AG04449 (cell line): ENCODE measurements at regions of chr3 and their contacts with region 1.

Region 1: GRCh38 chr3:167380004-167380689 is at the start of gene ZBBX:
- DNase-seq: no peak
- H3K4me3 ChIP-seq: peak within 1 kb of the TSS; percentile 54
- CTCF ChIP-seq: peak; percentile 79

Region 2: GRCh38 chr3:167740961-167741587 is 360.9 kb after region 1 on chr3:
- CTCF ChIA-PET with region 1: interaction called, 17 read pairs
- POLR2A ChIA-PET with region 1: no interaction called
- DNase-seq: no peak
- H3K4me3 ChIP-seq: no peak overlapping the region
- CTCF ChIP-seq: peak; percentile 50

Region 3: GRCh38 chr3:167882067-167882667 is 502.0 kb after region 1 on chr3:
- CTCF ChIA-PET with region 1: interaction called, 28 read pairs
- POLR2A ChIA-PET with region 1: no interaction called
- DNase-seq: no peak
- H3K4me3 ChIP-seq: no peak overlapping the region
- CTCF ChIP-seq: peak; percentile 26